Activated naive CD4-positive, alpha-beta T cell treated with anti-CD3 and anti-CD28 coated beads for 36 hours (primary cell): ENCODE measurements at regions of chr6 and their contacts with region 1.

Region 1: GRCh38 chr6:53492860-53493634 is 51.9 kb downstream of the GCLC start:
- DNase-seq: peak; percentile 45
- H3K4me3 Mint-ChIP-seq: no peak overlapping the region
- H3K27ac Mint-ChIP-seq: no peak overlapping the region
- H3K4me1 Mint-ChIP-seq: peaks cover 10% of the 10 kb centered on the region
- H3K27me3 Mint-ChIP-seq: peaks cover 16% of the 10 kb centered on the region

Region 2: DNA sequence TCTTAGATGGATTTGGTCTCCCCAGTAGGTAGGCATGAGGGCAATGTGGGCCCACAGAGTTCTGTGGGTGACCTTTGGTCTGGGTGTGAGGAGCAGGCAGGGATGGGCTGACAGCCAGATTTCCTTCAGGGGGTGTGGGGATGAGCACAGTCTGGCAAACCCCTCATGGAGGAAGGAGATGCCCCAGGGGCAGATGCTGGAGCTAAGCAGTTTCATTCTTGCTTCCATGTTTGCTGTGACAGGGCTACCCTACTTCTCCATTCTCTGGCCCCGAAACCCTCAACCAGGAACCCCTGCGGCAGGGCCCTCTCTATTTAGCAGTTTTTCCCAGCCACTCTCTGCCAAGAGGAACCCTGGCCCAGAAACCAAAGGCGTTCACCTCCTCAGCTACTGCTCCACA is 11.5 kb after region 1 on chr6:
- CTCF ChIA-PET with region 1: interaction called, 14 read pairs
- intact Hi-C with region 1: loop called (anchors 1 kb)
- DNase-seq: no peak
- H3K4me3 Mint-ChIP-seq: no peak overlapping the region
- H3K27ac Mint-ChIP-seq: no peak overlapping the region
- H3K4me1 Mint-ChIP-seq: no peaks in the 10 kb centered on the region
- H3K27me3 Mint-ChIP-seq: no peaks in the 10 kb centered on the region

Region 3: GRCh38 chr6:53615633-53616449 is 122.8 kb after region 1 on chr6:
- CTCF ChIA-PET with region 1: no interaction called
- intact Hi-C with region 1: no loop called
- DNase-seq: peak; percentile 12
- H3K4me3 Mint-ChIP-seq: no peak overlapping the region
- H3K27ac Mint-ChIP-seq: no peak overlapping the region
- H3K4me1 Mint-ChIP-seq: peaks cover 4% of the 10 kb centered on the region
- H3K27me3 Mint-ChIP-seq: peaks cover 9% of the 10 kb centered on the region

Region 4: GRCh38 chr6:53651764-53652401 is 158.8 kb after region 1 on chr6:
- CTCF ChIA-PET with region 1: interaction called, 90 read pairs
- intact Hi-C with region 1: loop called (anchors 1 kb)
- DNase-seq: peak; percentile 81
- H3K4me3 Mint-ChIP-seq: peak overlapping the region; percentile 85
- H3K27ac Mint-ChIP-seq: peak overlapping the region; percentile 46
- H3K4me1 Mint-ChIP-seq: peaks cover 26% of the 10 kb centered on the region
- H3K27me3 Mint-ChIP-seq: no peaks in the 10 kb centered on the region

Region 5: DNA sequence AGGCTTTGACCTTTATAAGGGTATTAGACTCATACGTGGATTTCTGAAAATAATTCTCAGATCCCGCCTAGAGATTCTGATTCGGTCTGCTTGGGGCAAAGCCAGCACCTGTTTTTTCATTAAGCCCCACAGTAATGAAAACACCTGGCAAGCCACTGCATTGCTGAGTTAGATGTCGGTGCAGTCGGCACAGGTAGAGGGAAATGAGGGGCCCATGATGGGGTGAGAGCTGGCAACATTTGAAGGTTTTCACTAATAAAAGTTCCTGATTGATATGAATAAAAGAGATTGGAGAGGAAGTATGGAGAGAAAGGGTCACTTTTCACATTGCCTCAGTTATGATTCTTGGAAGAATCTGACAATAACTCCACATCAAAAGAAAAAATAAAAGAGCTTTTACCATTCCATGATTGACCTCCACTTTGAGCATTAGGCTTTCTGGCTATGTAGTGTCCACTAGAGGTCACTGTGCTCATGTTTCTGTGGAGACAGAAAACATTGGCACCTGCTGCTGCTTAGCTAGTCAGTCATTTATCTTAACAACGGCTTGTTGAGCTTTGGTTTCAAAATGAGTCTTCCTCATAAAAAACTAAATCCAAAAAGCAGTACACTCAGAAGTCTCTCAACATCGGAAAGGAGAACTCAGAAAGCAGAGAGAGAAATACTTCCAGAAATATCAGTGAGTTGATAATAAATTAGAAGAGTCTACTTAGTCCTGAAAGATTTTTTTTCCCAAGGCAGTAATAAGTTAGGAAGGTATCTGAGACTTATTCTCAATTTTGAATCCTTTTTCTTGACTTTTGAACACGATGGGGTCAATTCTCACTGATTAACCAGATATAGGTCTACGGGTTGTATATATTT is 225.8 kb after region 1 on chr6:
- CTCF ChIA-PET with region 1: interaction called, 89 read pairs
- intact Hi-C with region 1: no loop called
- DNase-seq: peak; percentile 46
- H3K4me3 Mint-ChIP-seq: no peak overlapping the region
- H3K27ac Mint-ChIP-seq: no peak overlapping the region
- H3K4me1 Mint-ChIP-seq: peaks cover 7% of the 10 kb centered on the region
- H3K27me3 Mint-ChIP-seq: peaks cover 8% of the 10 kb centered on the region